ENCODE measurements at regions of chr19 and their contacts with region 1.

Region 1: DNA sequence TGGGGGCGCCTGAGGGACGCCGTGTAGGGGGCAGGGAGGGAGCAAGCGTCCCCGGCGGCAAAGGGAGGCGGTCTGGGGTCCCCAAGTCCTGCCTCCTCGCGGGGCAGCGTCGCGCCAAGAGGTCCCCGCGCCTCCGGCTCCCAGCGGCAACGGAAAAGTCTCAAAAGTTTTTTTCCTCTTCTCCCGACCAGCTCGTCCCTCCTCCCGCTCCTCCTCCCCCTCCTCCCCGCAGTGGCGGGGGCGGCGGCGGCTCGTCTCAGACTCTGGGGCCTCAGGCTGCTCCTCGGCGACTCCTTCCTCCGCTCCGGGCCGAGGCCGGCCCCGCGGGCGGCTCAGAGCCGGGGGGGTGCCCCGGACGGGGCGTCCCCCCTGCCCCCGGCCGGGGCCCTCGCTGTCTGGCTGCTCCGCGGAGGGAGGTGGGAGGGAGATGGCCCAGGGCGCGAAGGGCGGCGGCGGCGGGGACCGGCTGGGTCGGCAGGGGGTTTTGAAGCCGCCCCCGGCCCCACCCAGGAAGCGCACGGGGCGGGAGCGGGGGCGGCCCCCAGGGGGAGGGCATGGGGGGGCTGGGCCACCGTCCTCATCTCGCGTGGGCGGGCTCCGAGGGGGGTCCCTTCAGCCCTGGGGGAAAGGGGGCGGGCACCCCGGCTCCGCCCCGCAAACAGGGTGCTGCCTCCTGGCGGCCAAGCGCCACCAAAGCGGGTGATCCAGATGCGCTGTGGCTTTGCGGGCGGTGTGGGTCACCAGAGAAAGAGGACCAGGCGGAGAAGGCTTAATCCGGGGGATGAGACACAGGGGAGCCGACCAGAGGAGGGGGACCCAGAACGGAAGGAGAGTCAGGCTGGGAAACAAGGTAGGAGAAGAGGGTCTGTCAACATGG is at the start of gene TGFB1:
- DNase-seq: peak; percentile 93 to 95 (median 94)
- H3K4me3 ChIP-seq: peak within 1 kb of the TSS; percentile 68 to 88
- H3K4me3 Mint-ChIP-seq: peak within 1 kb of the TSS; percentile 90 to 100 (median 99)
- H3K27ac ChIP-seq: peak within 1 kb of the TSS; percentile 91
- H3K27ac Mint-ChIP-seq: peak within 1 kb of the TSS; percentile 89 to 99 (median 98)
- H3K4me1 ChIP-seq: peaks cover 68% of the 10 kb centered on the region
- H3K4me1 Mint-ChIP-seq: peaks cover 51 to 73% (median 61%) of the 10 kb centered on the region in 4 donors
- H3K27me3 ChIP-seq: no peaks in the 10 kb centered on the region
- H3K27me3 Mint-ChIP-seq: no peaks in the 10 kb centered on the region
- total RNA-seq, gene TGFB1: 136 to 143 TPM

Region 2: GRCh38 chr19:41206926-41207750 is 146.6 kb before region 1 on chr19:
- CTCF ChIA-PET with region 1: interaction called, 19 read pairs
- POLR2A ChIA-PET with region 1: interaction called, 15 read pairs
- intact Hi-C with region 1: loop called (anchors 1 kb)
- DNase-seq: no peak
- H3K4me3 ChIP-seq: no peak overlapping the region
- H3K4me3 Mint-ChIP-seq: no peak overlapping the region
- H3K27ac ChIP-seq: no peak overlapping the region
- H3K27ac Mint-ChIP-seq: peak overlapping the region in 2 of 7 donors; percentile 76 to 78
- H3K4me1 ChIP-seq: no peaks in the 10 kb centered on the region
- H3K4me1 Mint-ChIP-seq: peaks cover 3 to 11% (median 9%) of the 10 kb centered on the region in 4 donors
- H3K27me3 ChIP-seq: no peaks in the 10 kb centered on the region
- H3K27me3 Mint-ChIP-seq: peaks cover 0 to 3% of the 10 kb centered on the region in 2 donors

Region 3: DNA sequence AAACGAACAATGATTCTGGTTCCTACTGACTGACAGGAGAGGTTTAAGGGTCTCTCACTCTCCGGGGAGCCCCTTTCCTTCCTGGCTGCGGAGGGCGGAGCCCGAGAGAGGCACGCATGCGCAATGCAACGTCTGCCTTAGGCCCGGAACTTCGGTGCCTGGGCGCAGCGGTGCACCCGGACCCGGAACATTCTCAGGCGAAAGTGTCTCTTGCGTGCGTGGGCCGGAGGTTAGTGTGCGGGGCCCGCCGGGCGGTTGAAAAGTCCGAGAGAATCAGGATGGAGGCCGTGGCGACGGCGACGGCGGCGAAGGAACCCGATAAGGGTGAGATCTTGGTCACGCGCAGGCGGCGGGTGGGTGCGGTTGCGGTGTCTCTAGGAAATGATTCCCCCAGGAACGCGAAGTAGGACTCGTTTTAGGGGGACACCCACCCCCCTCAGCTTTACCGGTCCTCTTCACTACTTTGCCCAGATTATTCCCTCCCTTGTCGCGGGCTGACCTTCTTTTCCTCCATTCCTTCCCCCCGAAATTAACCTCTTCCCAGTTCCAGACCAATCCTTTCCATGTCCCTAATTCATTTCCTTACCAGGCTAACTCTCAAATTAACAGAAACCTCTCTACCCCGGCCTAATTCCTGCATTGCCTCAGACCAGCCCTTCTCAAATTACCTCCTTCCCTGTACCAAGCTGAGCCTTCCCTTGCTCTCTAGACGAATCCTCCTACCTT is 43.5 kb before region 1 on chr19 and contains the start of gene CCDC97:
- CTCF ChIA-PET with region 1: interaction called, 12 read pairs
- POLR2A ChIA-PET with region 1: interaction called, 273 read pairs
- intact Hi-C with region 1: loop called (anchors 1 kb)
- DNase-seq: peak; percentile 86 to 92 (median 89)
- H3K4me3 ChIP-seq: peak within 1 kb of the TSS; percentile 82 to 98
- H3K4me3 Mint-ChIP-seq: peak within 1 kb of the TSS; percentile 96 to 100 (median 97)
- H3K27ac ChIP-seq: peak within 1 kb of the TSS; percentile 92
- H3K27ac Mint-ChIP-seq: peak within 1 kb of the TSS; percentile 97 to 100 (median 99)
- H3K4me1 ChIP-seq: peaks cover 76% of the 10 kb centered on the region
- H3K4me1 Mint-ChIP-seq: peaks cover 43 to 87% (median 68%) of the 10 kb centered on the region in 4 donors
- H3K27me3 ChIP-seq: no peaks in the 10 kb centered on the region
- H3K27me3 Mint-ChIP-seq: no peaks in the 10 kb centered on the region
- total RNA-seq, gene CCDC97: 56.4 to 61.4 TPM

Region 4: GRCh38 chr19:41334793-41335192 is 18.9 kb before region 1 on chr19:
- CTCF ChIA-PET with region 1: interaction called, 19 read pairs
- POLR2A ChIA-PET with region 1: interaction called, 136 read pairs
- intact Hi-C with region 1: no loop called
- DNase-seq: no peak
- H3K4me3 ChIP-seq: no peak overlapping the region
- H3K4me3 Mint-ChIP-seq: peak overlapping the region in 1 of 8 donors; percentile 30
- H3K27ac ChIP-seq: no peak overlapping the region
- H3K27ac Mint-ChIP-seq: peak overlapping the region in 6 of 7 donors; percentile 29 to 91 (median 60)
- H3K4me1 ChIP-seq: peaks cover 53% of the 10 kb centered on the region
- H3K4me1 Mint-ChIP-seq: peaks cover 24 to 63% (median 36%) of the 10 kb centered on the region in 4 donors
- H3K27me3 ChIP-seq: no peaks in the 10 kb centered on the region
- H3K27me3 Mint-ChIP-seq: no peaks in the 10 kb centered on the region

Region 5: DNA sequence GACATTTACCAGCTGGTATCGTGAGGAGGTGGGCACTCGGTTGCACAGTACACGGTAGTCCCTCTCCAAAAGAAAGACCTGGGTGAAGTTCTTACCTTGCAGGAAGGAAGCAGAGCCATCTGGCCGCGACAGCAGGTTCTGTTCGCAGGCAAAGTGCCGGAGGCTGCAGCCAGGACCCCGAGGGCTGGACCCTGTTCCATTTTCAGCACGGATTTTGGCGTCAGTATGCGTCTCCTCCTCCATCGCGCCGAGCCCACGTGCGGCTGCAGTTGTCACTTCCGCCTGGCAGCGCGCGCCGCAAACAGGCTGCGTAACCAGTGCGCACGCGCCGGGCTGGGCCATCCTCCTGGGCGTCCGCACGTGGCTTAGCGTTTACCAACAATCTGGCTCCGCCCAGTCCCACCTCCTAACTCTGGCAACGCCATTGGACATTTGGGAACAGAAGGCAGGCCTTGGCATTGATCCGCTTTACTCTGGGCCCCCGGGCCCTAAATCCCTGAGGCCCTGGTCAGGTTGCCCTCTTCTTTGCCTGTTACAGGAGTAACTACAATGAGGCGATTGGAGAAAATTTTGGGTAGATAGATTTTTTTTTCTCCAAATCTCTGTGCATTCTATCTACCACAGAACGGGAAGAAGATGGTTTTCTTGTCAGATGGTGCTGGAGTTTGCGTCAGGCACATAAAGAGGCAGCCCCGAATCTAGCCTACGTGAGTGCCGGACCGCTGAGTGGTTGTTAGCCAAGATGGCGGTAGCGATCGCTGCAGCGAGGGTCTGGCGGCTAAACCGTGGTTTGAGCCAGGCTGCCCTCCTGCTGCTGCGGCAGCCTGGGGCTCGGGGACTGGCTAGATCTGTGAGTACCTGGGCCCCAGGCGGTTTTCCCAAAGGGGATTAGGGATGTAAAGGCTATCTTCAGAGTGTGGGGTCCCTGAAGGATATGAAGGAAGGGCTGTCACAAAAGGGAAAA is 43.7 kb after region 1 on chr19 and contains the starts of genes BCKDHA and EXOSC5:
- CTCF ChIA-PET with region 1: interaction called, 3 read pairs
- POLR2A ChIA-PET with region 1: interaction called, 4 read pairs
- intact Hi-C with region 1: loop called (anchors 1 kb)
- DNase-seq: peak; percentile 98 to 100 (median 100)
- H3K4me3 ChIP-seq: peak within 1 kb of the TSS; percentile 94 to 96
- H3K4me3 Mint-ChIP-seq: peak within 1 kb of the TSS; percentile 94 to 100 (median 98)
- H3K27ac ChIP-seq: peak within 1 kb of the TSS; percentile 93
- H3K27ac Mint-ChIP-seq: peak within 1 kb of the TSS; percentile 98 to 100 (median 100)
- H3K4me1 ChIP-seq: peaks cover 31% of the 10 kb centered on the region
- H3K4me1 Mint-ChIP-seq: peaks cover 27 to 54% (median 41%) of the 10 kb centered on the region in 4 donors
- H3K27me3 ChIP-seq: no peaks in the 10 kb centered on the region
- H3K27me3 Mint-ChIP-seq: no peaks in the 10 kb centered on the region
- total RNA-seq, gene BCKDHA: 23.6 to 27.1 TPM
- total RNA-seq, gene EXOSC5: 18.2 to 23.0 TPM

Region 6: GRCh38 chr19:41548954-41549688 is 195.4 kb after region 1 on chr19:
- CTCF ChIA-PET with region 1: interaction called, 3 read pairs
- POLR2A ChIA-PET with region 1: interaction called, 28 read pairs
- intact Hi-C with region 1: loop called (anchors 5 kb)
- DNase-seq: peak; percentile 72 to 82 (median 75)
- H3K4me3 ChIP-seq: peak overlapping the region; percentile 75 to 91
- H3K4me3 Mint-ChIP-seq: peak overlapping the region; percentile 98 to 100 (median 99)
- H3K27ac ChIP-seq: peak overlapping the region; percentile 63
- H3K27ac Mint-ChIP-seq: peak overlapping the region; percentile 89 to 98 (median 97)
- H3K4me1 ChIP-seq: peaks cover 63% of the 10 kb centered on the region
- H3K4me1 Mint-ChIP-seq: peaks cover 50 to 82% (median 61%) of the 10 kb centered on the region in 4 donors
- H3K27me3 ChIP-seq: no peaks in the 10 kb centered on the region
- H3K27me3 Mint-ChIP-seq: no peaks in the 10 kb centered on the region

Measured in CD4-positive, alpha-beta memory T cell (primary cell).